Activated CD4-positive, alpha-beta T cell treated with anti-CD3 and anti-CD28 coated beads, Interleukin-2, amount 10 ng/mL, durations not matched to agents 24 days and 14 days (primary cell): ENCODE measurements at regions of chr9 and their contacts with region 1.

Region 1: GRCh38 chr9:7536310-7536939 is 263.2 kb downstream of the DMAC1 start:
- DNase-seq: peak; percentile 84
- H3K4me3 Mint-ChIP-seq: no peak overlapping the region
- H3K27ac Mint-ChIP-seq: no peak overlapping the region
- H3K4me1 Mint-ChIP-seq: peaks cover 32% of the 10 kb centered on the region
- H3K27me3 Mint-ChIP-seq: peaks cover 7% of the 10 kb centered on the region

Region 2: GRCh38 chr9:6827439-6827838 is 709.0 kb before region 1 on chr9:
- intact Hi-C with region 1: loop called (anchors 2 kb)
- DNase-seq: peak; percentile 86
- H3K4me3 Mint-ChIP-seq: no peak overlapping the region
- H3K27ac Mint-ChIP-seq: peak overlapping the region; percentile 68
- H3K4me1 Mint-ChIP-seq: peaks cover 5% of the 10 kb centered on the region
- H3K27me3 Mint-ChIP-seq: no peaks in the 10 kb centered on the region

Region 3: GRCh38 chr9:6894135-6894534 is 642.3 kb before region 1 on chr9:
- intact Hi-C with region 1: loop called (anchors 5 kb)
- DNase-seq: peak; percentile 76
- H3K4me3 Mint-ChIP-seq: peak overlapping the region; percentile 57
- H3K27ac Mint-ChIP-seq: peak overlapping the region; percentile 69
- H3K4me1 Mint-ChIP-seq: peaks cover 29% of the 10 kb centered on the region
- H3K27me3 Mint-ChIP-seq: no peaks in the 10 kb centered on the region

Region 4: GRCh38 chr9:7055201-7055903 is 481.1 kb before region 1 on chr9:
- intact Hi-C with region 1: loop called (anchors 1 kb)
- DNase-seq: no peak
- H3K4me3 Mint-ChIP-seq: no peak overlapping the region
- H3K27ac Mint-ChIP-seq: no peak overlapping the region
- H3K4me1 Mint-ChIP-seq: peaks cover 7% of the 10 kb centered on the region
- H3K27me3 Mint-ChIP-seq: no peaks in the 10 kb centered on the region

Region 5: DNA sequence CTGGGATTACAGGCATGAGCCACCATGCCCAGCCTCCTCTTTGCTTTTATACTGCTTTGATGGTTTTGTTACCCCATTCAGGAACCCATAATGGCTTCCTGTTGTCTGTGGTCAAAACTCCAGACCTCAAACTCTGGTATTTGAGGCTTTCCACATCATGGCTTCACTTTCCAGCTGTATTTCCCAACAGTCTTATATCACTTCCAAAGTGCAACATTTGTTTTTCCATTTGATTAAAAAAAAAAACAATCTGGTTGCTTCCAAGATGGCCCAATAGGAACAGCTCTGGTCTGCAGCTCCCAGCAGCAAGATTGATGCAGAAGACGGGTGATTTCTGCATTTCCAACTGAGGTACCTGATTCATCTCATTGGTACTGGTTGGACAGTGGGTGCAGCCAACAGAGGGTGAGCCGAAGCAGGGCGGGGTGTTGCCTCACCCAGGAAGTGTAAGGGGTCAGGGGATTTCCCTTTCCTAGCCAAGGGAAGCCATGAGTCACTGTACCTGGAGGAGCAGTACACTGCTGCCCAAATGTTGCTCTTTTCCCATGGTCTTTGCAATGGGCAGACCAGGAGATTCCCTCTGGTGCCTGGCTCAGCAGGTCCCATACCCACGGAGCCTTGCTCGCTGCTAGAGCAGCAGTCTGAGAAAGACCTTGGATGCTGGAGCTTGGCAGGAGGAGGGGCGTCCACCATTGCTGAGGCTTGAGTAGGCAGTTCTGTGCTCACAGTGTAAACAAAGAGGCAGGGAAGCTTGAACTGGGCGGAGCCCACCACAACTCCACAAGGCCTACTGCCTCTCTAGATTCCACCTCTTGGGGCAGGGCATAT is 320.2 kb before region 1 on chr9:
- intact Hi-C with region 1: loop called (anchors 5 kb)
- DNase-seq: peak; percentile 85
- H3K4me3 Mint-ChIP-seq: peak overlapping the region; percentile 45
- H3K27ac Mint-ChIP-seq: peak overlapping the region; percentile 62
- H3K4me1 Mint-ChIP-seq: peaks cover 18% of the 10 kb centered on the region
- H3K27me3 Mint-ChIP-seq: peaks cover 32% of the 10 kb centered on the region

Region 6: GRCh38 chr9:7405924-7406604 is 130.4 kb before region 1 on chr9:
- intact Hi-C with region 1: loop called (anchors 5 kb)
- DNase-seq: no peak
- H3K4me3 Mint-ChIP-seq: no peak overlapping the region
- H3K27ac Mint-ChIP-seq: no peak overlapping the region
- H3K4me1 Mint-ChIP-seq: peaks cover 10% of the 10 kb centered on the region
- H3K27me3 Mint-ChIP-seq: peaks cover 13% of the 10 kb centered on the region

Region 7: GRCh38 chr9:7510199-7510598 is 26.2 kb before region 1 on chr9:
- intact Hi-C with region 1: no loop called
- DNase-seq: no peak
- H3K4me3 Mint-ChIP-seq: no peak overlapping the region
- H3K27ac Mint-ChIP-seq: no peak overlapping the region
- H3K4me1 Mint-ChIP-seq: no peaks in the 10 kb centered on the region
- H3K27me3 Mint-ChIP-seq: peaks cover 7% of the 10 kb centered on the region

Region 8: GRCh38 chr9:7665874-7666273 is 129.4 kb after region 1 on chr9:
- intact Hi-C with region 1: no loop called
- DNase-seq: no peak
- H3K4me3 Mint-ChIP-seq: no peak overlapping the region
- H3K27ac Mint-ChIP-seq: no peak overlapping the region
- H3K4me1 Mint-ChIP-seq: no peaks in the 10 kb centered on the region
- H3K27me3 Mint-ChIP-seq: peaks cover 2% of the 10 kb centered on the region